PC-9 (cell line): ENCODE measurements at regions of chr4 and their contacts with region 1.

Region 1: DNA sequence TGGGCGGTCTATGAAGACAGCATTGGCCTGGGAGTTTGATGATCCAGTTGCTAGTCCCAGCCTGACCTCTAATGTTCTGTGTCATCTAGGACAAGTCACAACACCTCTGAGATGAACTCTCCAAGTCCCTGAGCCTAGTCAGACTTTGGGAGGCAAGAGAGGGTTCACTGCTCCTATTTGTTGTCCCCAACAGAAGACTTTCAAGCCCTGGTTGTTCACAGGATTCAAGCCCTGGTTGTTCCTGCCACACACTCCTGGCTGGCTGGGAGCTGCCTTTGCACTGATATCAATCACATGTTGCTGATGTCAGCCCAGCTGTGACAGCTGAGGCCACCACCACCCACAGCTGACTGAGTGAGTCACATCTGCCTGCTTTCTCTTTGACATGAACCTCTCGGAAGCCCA is 253.2 kb upstream of the RASGEF1B start:
- DNase-seq: no peak
- H3K4me3 ChIP-seq: no peak overlapping the region
- H3K27ac ChIP-seq: no peak overlapping the region
- H3K4me1 ChIP-seq: no peaks in the 10 kb centered on the region
- H3K27me3 ChIP-seq: no peaks in the 10 kb centered on the region
- CTCF ChIP-seq: no peak

Region 2: DNA sequence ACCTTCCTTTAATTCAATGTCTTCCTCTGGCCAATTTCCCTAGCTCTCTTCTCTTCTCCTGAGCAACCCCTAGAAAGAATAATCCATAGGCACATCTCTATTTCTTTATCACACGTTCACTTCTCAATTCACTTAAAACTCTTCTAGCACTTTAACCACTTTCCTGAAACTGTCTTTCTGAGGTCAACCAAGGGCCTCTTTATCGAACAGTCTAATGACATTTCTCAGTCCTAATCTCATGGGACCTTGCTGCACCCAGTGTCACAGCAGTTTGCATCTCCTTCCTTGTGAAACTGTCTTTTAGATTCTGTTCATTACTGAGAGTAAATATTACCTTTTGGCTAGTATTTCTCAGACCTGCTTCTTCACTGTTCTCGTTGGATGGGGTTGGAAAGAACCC is 32.0 kb after region 1 on chr4:
- CTCF ChIA-PET with region 1: no interaction called
- POLR2A ChIA-PET with region 1: no interaction called
- intact Hi-C with region 1: loop called (anchors 1 kb)
- DNase-seq: no peak
- H3K4me3 ChIP-seq: no peak overlapping the region
- H3K27ac ChIP-seq: no peak overlapping the region
- H3K4me1 ChIP-seq: no peaks in the 10 kb centered on the region
- H3K27me3 ChIP-seq: no peaks in the 10 kb centered on the region
- CTCF ChIP-seq: no peak

Region 3: GRCh38 chr4:81827577-81828202 is 102.8 kb after region 1 on chr4:
- CTCF ChIA-PET with region 1: no interaction called
- POLR2A ChIA-PET with region 1: no interaction called
- intact Hi-C with region 1: no loop called
- DNase-seq: no peak
- H3K4me3 ChIP-seq: no peak overlapping the region
- H3K27ac ChIP-seq: no peak overlapping the region
- H3K4me1 ChIP-seq: no peaks in the 10 kb centered on the region
- H3K27me3 ChIP-seq: no peaks in the 10 kb centered on the region
- CTCF ChIP-seq: no peak